ENCODE measurements at regions of chr11 and their contacts with region 1.

Region 1: GRCh38 chr11:39221550-39222138 is 2237.8 kb downstream of the LRRC4C start:
- DNase-seq: peak; percentile 79
- H3K4me3 ChIP-seq: no peak overlapping the region
- H3K27ac ChIP-seq: peak overlapping the region; percentile 98
- H3K4me1 ChIP-seq: peaks cover 40% of the 10 kb centered on the region
- H3K27me3 ChIP-seq: no peaks in the 10 kb centered on the region
- CTCF ChIP-seq: no peak

Region 2: DNA sequence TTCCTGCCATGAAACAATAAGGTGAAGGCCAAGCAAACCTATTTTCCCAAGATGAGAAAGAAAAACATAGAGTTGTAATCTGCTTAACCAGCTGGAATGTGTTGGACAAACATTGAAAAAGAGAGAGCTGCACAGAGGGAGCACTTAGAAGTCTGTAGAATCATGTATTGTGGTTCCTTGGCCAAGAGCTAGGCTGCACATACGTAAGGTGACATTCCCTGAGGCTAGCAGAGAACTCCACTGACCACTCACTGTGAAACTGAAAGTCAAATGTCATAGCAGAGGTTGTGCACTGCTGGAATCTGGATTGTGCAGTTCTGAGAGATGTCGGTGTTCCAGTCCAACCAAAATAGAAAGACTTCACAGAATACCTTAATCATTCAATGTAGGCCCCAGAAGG is 1850.9 kb before region 1 on chr11:
- CTCF ChIA-PET with region 1: interaction called, 11 read pairs
- POLR2A ChIA-PET with region 1: no interaction called
- intact Hi-C with region 1: no loop called
- DNase-seq: no peak
- H3K4me3 ChIP-seq: no peak overlapping the region
- H3K27ac ChIP-seq: no peak overlapping the region
- H3K4me1 ChIP-seq: no peaks in the 10 kb centered on the region
- H3K27me3 ChIP-seq: no peaks in the 10 kb centered on the region
- CTCF ChIP-seq: no peak

Region 3: DNA sequence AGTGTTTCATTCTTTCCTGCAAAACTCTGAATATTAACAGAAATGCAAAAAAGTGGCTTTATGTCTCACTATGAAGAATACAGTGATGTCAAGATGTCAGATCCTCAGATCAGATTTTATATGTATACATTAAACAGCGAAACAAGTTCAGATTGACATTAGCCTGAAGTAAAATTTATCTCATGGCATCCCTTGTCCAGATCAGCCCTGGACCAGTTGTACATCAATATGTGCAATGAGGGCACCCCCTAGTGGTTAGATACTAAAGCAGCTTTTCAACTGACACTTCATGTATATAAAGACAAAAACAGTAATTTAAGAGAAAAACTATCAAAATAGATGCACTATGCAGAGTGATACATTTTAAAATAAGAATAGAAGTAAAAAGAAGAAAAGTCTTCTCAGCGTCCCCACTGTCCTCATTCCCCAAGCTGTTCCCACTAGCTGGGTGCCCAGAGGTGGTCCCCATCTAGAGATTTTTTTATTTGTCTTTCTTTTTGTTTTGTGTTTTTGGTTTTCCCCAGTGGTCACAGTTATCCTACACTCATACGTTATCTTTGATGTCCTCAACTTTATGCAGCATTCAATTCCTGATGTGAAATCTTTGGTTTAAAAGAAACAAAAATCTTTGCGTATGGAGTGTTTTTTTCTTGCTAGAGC is 430.2 kb before region 1 on chr11:
- CTCF ChIA-PET with region 1: no interaction called
- POLR2A ChIA-PET with region 1: no interaction called
- intact Hi-C with region 1: loop called (anchors 5 kb)
- DNase-seq: peak; percentile 96
- H3K4me3 ChIP-seq: no peak overlapping the region
- H3K27ac ChIP-seq: no peak overlapping the region
- H3K4me1 ChIP-seq: peaks cover 10% of the 10 kb centered on the region
- H3K27me3 ChIP-seq: no peaks in the 10 kb centered on the region
- CTCF ChIP-seq: peak; percentile 100

Region 4: DNA sequence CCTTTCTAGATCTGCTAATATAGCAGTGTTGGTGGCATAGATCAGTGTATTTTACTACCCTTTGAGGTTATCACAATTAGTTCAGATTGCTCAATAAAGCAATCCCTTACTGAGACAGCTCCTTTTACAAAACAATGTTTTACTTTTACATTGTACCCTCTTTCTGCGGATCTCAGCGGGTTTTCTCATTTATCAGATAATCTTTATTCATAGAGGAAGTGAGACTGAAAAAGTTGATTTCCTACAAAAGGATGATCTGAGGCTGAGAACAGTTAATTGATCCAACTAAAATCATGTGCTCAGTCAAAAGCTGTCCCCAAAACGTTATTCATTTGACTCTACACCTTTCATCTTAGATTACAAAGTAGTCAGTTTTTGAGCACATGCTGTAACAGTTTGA is 82.1 kb before region 1 on chr11:
- CTCF ChIA-PET with region 1: no interaction called
- POLR2A ChIA-PET with region 1: no interaction called
- intact Hi-C with region 1: loop called (anchors 1 kb)
- DNase-seq: peak; percentile 99
- H3K4me3 ChIP-seq: no peak overlapping the region
- H3K27ac ChIP-seq: peak overlapping the region; percentile 61
- H3K4me1 ChIP-seq: peaks cover 36% of the 10 kb centered on the region
- H3K27me3 ChIP-seq: no peaks in the 10 kb centered on the region
- CTCF ChIP-seq: no peak

Region 5: DNA sequence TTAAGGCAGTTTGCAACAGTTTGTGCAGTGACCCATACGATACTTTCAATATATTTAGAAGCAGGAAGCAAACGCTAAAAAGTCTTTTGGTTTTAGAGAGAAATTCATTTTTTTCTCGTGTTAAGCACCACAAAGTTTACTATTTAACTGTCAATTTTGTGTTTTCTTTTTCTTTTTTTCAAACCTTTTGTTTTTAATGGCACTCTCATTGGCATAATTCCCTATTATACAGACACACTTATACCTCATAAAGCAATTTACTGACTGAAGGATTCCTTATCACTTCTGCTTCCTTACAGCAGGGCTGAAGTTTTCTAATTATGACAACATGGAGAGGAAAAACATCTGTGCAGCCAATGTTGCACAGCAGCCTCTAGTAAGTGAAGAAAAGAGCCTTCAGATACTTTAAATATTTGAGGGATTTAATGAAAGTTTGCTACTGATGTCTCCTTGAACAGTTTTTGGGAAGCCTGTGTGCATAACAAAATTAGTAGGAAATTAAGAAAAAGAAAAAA is 46.6 kb after region 1 on chr11:
- CTCF ChIA-PET with region 1: no interaction called
- POLR2A ChIA-PET with region 1: no interaction called
- intact Hi-C with region 1: no loop called
- DNase-seq: peak; percentile 72
- H3K4me3 ChIP-seq: no peak overlapping the region
- H3K27ac ChIP-seq: peak overlapping the region; percentile 56
- H3K4me1 ChIP-seq: peaks cover 21% of the 10 kb centered on the region
- H3K27me3 ChIP-seq: no peaks in the 10 kb centered on the region
- CTCF ChIP-seq: no peak

Region 6: DNA sequence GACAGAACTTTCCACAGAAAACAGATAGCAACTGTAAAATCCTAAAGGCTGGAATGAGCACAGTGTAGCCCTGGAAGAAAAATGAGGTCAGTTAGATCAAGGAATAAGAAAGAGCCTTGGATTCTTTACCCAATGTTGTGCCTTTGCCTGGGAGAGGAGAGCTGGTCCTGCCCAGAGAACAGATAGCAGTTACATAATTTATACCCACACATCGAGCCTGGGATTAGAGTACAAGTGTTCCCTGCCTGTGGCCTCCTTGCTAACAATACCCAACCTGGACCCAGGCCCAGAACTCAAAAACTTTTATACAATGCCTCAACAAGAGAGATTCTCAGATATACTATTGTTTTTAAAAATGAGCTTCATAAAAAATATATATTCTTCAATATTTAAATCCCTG is 239.4 kb after region 1 on chr11:
- CTCF ChIA-PET with region 1: interaction called, 10 read pairs
- POLR2A ChIA-PET with region 1: no interaction called
- intact Hi-C with region 1: loop called (anchors 1 kb)
- DNase-seq: peak; percentile 69
- H3K4me3 ChIP-seq: no peak overlapping the region
- H3K27ac ChIP-seq: peak overlapping the region; percentile 99
- H3K4me1 ChIP-seq: peaks cover 54% of the 10 kb centered on the region
- H3K27me3 ChIP-seq: no peaks in the 10 kb centered on the region
- CTCF ChIP-seq: no peak

Region 7: DNA sequence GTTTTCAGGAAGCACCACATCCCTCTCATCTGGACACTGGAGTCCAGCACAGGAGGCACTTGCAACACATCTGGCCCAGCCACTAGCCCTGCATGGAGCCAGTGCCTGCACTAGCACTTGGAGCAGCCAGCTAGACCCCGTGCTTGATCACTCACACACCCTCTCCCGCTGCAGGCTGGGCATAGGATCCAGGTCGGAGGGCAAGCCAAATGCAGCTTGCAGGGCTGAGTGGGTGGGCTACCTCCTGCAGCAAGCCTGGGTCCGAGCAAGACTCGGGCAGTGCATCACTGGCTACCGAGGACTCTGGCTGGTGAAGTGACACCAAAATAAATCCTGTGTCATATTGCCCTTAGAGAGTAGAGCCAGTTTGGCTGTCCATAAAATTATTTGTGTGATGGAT is 442.4 kb after region 1 on chr11:
- CTCF ChIA-PET with region 1: no interaction called
- POLR2A ChIA-PET with region 1: no interaction called
- intact Hi-C with region 1: no loop called
- DNase-seq: no peak
- H3K4me3 ChIP-seq: no peak overlapping the region
- H3K27ac ChIP-seq: no peak overlapping the region
- H3K4me1 ChIP-seq: no peaks in the 10 kb centered on the region
- H3K27me3 ChIP-seq: no peaks in the 10 kb centered on the region
- CTCF ChIP-seq: no peak

Region 8: GRCh38 chr11:40293655-40294348 is 1072.2 kb after region 1 on chr11:
- CTCF ChIA-PET with region 1: interaction called, 4 read pairs
- POLR2A ChIA-PET with region 1: no interaction called
- intact Hi-C with region 1: loop called (anchors 2 kb)
- DNase-seq: peak; percentile 99
- H3K4me3 ChIP-seq: peak overlapping the region; percentile 61
- H3K27ac ChIP-seq: peak overlapping the region; percentile 78
- H3K4me1 ChIP-seq: peaks cover 11% of the 10 kb centered on the region
- H3K27me3 ChIP-seq: no peaks in the 10 kb centered on the region
- CTCF ChIP-seq: peak; percentile 100

Region 9: GRCh38 chr11:40514124-40514523 is 1292.5 kb after region 1 on chr11:
- CTCF ChIA-PET with region 1: no interaction called
- POLR2A ChIA-PET with region 1: no interaction called
- intact Hi-C with region 1: no loop called
- DNase-seq: peak; percentile 74
- H3K4me3 ChIP-seq: no peak overlapping the region
- H3K27ac ChIP-seq: no peak overlapping the region
- H3K4me1 ChIP-seq: no peaks in the 10 kb centered on the region
- H3K27me3 ChIP-seq: no peaks in the 10 kb centered on the region
- CTCF ChIP-seq: peak; percentile 33; the same call in 1 of the 2 replicates